ENCODE measurements at regions of chr7 and their contacts with region 1.

Region 1: DNA sequence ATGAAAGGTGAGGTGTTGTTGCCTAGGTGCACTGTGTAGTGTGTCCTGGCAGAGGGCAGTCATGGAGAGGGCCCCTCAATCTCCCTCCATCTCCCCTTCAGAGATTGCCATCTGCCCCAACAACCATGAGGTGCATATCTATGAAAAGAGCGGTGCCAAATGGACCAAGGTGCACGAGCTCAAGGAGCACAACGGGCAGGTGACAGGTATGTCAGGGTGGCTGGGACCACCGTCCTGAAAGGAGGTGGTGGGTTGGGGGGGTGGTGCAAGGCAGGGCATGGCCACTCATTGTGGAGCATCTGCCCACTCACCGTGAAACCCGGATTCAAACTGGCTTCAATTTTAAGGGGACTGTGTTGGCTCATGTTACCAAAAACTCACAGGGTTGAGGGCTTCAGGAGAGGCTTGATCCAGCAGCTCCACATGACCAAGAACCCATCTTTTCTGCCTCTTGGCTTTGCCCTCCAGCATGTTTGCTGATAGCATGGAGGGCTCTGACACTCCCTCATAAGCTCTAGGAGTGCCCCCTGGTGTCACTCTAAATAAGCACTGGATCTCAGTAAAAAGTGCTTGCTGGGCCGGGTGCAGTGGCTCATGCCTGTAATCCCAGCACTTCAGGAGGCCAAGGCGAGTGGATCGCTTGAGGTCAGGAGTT is 12.2 kb downstream of the ARPC1B start:
- DNase-seq: peak; percentile 54
- H3K4me3 Mint-ChIP-seq: no peak overlapping the region
- H3K27ac Mint-ChIP-seq: no peak overlapping the region
- H3K4me1 Mint-ChIP-seq: peaks cover 19% of the 10 kb centered on the region
- H3K27me3 Mint-ChIP-seq: no peaks in the 10 kb centered on the region

Region 2: DNA sequence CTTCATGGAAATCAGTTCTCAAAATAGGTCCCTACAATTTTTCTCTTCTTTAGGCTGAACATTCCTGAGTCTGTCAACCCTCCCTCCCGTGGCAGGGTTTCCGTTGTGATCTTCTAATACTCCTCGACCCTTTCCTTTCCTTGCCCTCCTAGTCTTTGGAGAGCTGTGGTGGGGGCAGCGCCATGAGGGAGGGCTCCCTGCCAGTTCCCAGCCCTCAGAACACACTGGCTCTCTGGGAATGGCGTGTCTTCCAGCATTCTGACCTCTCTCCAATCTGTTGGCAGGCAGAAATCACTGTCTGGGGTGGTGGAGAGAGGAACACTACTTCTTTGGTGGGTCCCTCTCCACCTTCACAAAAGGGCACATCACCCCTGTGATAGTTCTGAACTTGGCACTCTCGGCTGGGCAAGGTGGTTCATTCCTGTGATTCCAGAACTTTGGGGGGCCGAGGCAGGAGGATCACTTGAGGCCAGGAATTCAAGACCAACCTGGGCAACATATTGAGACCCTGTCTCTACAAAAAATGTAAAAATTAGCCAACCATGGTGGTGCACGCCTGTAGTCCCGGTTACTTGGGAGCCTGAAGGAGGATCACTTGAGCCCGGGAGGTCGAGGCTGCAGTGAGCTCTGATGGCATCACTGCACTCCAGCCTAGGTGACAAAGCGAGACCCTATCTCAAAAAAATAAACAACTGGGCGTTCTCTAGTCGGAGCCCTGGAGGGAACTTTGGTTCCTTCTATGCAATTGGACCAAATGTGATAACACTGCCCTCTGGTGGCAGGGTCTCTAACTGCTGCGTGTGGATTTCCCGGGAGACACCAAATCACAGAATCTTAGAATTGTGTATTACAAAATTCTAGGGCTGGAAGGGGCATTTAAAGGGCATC is 74.2 kb before region 1 on chr7:
- CTCF ChIA-PET with region 1: no interaction called
- intact Hi-C with region 1: loop called (anchors 1 kb)
- DNase-seq: peak; percentile 86
- H3K4me3 Mint-ChIP-seq: no peak overlapping the region
- H3K27ac Mint-ChIP-seq: no peak overlapping the region
- H3K4me1 Mint-ChIP-seq: peaks cover 12% of the 10 kb centered on the region
- H3K27me3 Mint-ChIP-seq: no peaks in the 10 kb centered on the region

Region 3: DNA sequence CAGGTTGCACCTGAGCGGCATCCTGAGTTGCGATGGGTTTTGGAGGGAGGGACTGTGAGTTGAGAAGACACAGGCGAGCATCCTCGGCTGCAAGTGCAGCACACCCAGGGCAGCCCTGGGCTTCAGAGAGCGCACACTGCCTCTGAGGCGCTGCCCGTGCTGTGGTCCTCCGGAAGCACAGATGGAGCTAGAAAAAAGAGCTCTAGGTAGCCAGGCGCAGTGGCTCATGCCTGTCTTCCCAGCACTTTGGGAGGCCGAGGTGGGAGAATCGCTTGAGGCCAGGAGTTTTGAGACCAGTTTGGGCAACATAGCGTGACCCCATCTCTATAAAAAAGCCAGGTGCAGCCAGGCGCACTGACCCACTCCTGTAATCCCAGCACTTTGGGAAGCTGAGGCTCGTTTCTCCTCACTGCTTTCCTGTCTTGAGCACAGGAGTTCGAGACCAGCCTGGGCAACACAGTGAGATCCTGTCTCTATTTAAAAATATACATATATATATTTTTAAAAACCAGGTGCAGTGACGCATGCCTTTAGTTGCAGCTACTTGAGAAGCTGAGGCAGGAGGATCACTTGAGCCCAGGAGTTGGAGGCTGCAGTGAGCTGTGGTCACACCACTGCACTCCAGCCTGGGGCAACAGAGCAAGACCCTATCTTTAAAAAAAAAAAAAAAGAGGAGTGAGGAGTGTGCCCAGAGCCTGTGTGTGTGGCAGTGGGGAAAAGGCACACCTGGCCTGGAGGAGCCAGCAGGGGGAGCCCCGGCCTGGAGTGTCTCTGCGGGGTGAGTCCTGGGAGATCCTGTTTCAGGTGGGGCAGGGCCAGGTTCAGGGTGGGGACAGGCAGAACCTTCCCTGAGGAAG is 21.5 kb before region 1 on chr7:
- CTCF ChIA-PET with region 1: interaction called, 7 read pairs
- intact Hi-C with region 1: loop called (anchors 1 kb)
- DNase-seq: peak; percentile 71
- H3K4me3 Mint-ChIP-seq: no peak overlapping the region
- H3K27ac Mint-ChIP-seq: no peak overlapping the region
- H3K4me1 Mint-ChIP-seq: no peaks in the 10 kb centered on the region
- H3K27me3 Mint-ChIP-seq: no peaks in the 10 kb centered on the region